Activated CD8-positive, alpha-beta T cell treated with anti-CD3 and anti-CD28 coated beads for 36 hours (primary cell): ENCODE measurements at regions of chr6 and their contacts with region 1.

Region 1: DNA sequence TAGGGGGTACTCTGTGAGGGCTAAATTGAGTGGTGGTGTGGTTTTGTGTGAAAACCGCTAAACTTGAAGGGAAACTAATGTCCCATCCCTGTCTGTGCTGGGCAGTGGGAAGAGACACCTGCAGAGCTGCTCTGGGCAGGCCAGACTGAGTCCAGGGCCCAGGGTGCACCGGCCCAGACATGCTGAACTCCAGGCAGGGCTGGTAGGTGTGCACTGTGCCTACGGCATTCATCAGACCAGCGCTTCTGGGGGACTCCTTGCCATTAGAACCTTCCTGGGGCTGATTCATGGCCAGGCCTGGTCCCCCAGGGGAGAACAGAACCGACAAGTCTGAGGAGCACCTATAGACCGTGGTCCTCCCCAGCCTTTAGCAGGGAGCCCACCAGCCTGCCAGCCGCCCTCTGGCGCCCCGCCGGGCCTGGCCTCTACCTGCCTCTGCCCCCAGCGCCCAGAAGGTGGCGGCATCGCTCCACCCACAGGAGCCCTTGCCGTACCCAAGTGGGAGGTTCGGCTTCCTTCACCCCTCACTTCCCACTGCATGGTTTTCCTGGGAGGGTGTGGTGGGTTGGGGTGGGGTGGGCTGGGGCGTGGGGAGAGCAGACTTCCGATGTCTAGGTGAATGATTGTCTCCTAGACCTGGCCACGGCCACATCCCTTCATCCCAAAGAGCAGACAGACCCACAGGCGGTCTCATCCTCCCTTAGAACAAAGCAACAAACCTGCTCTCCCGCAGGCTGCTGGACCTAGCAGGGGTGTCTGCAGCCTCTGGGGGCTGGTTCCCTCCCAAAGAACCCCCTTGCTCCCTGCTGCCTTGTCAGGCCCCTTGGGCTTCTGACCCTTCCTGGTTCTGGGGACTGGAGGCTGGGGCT is 15.5 kb downstream of the CCDC167 start:
- DNase-seq: peak; percentile 79
- ATAC-seq: peak; percentile 88
- H3K4me3 Mint-ChIP-seq: no peak overlapping the region
- H3K27ac Mint-ChIP-seq: no peak overlapping the region
- H3K4me1 Mint-ChIP-seq: peaks cover 17% of the 10 kb centered on the region
- H3K27me3 Mint-ChIP-seq: no peaks in the 10 kb centered on the region
- CTCF ChIP-seq: peak; percentile 85

Region 2: DNA sequence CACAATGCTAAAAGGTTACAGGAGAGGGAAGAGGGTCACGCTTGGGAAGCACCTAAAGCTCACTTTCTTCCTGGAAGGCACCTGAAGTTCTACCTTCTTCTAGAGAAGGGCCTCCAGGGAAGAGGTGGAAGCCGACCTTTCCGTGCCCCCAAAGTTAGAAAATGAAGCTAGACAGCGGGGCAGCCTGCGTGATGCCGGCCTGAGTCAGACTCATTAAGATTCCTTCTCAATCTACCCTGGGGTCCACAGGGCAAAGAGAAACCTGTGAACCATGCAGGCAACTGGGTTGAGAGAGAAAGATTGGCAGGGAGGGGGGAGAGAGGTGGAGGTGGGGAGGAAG is 70.3 kb after region 1 on chr6:
- CTCF ChIA-PET with region 1: interaction called, 12 read pairs
- POLR2A ChIA-PET with region 1: interaction called, 4 read pairs
- intact Hi-C with region 1: no loop called
- DNase-seq: no peak
- ATAC-seq: no peak
- H3K4me3 Mint-ChIP-seq: no peak overlapping the region
- H3K27ac Mint-ChIP-seq: peak overlapping the region; percentile 40
- H3K4me1 Mint-ChIP-seq: peaks cover 30% of the 10 kb centered on the region
- H3K27me3 Mint-ChIP-seq: no peaks in the 10 kb centered on the region
- CTCF ChIP-seq: no peak

Region 3: GRCh38 chr6:37679539-37680476 is 195.7 kb after region 1 on chr6:
- CTCF ChIA-PET with region 1: no interaction called
- POLR2A ChIA-PET with region 1: no interaction called
- intact Hi-C with region 1: loop called (anchors 10 kb)
- DNase-seq: no peak
- ATAC-seq: no peak
- H3K4me3 Mint-ChIP-seq: no peak overlapping the region
- H3K27ac Mint-ChIP-seq: no peak overlapping the region
- H3K4me1 Mint-ChIP-seq: no peaks in the 10 kb centered on the region
- H3K27me3 Mint-ChIP-seq: no peaks in the 10 kb centered on the region
- CTCF ChIP-seq: no peak

Region 4: GRCh38 chr6:37868447-37868825 is 384.3 kb after region 1 on chr6:
- CTCF ChIA-PET with region 1: no interaction called
- POLR2A ChIA-PET with region 1: no interaction called
- intact Hi-C with region 1: no loop called
- DNase-seq: no peak
- ATAC-seq: peak; percentile 44
- H3K4me3 Mint-ChIP-seq: peak overlapping the region; percentile 13
- H3K27ac Mint-ChIP-seq: peak overlapping the region; percentile 81
- H3K4me1 Mint-ChIP-seq: peaks cover 60% of the 10 kb centered on the region
- H3K27me3 Mint-ChIP-seq: no peaks in the 10 kb centered on the region
- CTCF ChIP-seq: no peak